CD8-positive, alpha-beta T cell (primary cell): ENCODE measurements at regions of chr11 and their contacts with region 1.

Region 1: DNA sequence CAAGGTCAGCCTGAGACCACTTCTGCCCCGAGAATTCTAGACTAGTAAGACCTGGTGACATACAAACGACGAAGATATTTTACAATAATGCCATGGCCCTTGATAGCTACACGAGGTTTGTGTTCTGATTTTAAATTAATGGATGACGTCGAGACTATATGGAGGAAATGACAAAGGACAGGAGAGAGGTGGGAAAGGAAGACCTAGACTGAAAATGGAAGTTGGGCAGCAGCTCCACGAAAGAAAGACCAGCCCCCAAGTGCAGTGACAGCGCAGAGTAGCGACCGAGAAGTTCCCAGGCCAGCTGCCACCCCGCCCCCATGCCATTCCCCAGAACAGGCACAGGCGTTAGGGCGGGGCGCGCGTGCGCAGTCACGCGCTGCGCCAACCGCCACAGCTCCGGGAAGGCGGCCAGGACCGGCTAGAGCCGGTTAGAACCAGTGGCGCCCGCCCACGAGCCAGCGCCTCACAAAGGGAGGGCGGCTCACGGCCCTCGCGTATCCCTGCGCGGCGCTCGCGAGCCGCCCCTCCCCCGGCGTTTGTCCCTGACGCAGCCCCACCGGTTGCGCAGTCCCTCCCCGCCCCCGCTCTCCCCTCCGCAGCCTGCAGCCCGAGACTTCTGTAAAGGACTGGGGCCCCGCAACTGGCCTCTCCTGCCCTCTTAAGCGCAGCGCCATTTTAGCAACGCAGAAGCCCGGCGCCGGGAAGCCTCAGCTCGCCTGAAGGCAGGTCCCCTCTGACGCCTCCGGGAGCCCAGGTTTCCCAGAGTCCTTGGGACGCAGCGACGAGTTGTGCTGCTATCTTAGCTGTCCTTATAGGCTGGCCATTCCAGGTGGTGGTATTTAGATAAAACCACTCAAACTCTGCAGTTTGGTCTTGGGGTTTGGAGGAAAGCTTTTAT is 1.5 kb upstream of the MALAT1 start:
- DNase-seq: peak; percentile 95 to 99 (median 98)
- ATAC-seq: peak; percentile 80
- H3K4me3 ChIP-seq: peak overlapping the region; percentile 72 to 84
- H3K4me3 Mint-ChIP-seq: no peak overlapping the region
- H3K27ac ChIP-seq: peak overlapping the region; percentile 98 to 99
- H3K27ac Mint-ChIP-seq: no peak overlapping the region
- H3K4me1 ChIP-seq: peaks cover 13% of the 10 kb centered on the region
- H3K4me1 Mint-ChIP-seq: peaks cover 19% of the 10 kb centered on the region
- H3K27me3 ChIP-seq: no peaks in the 10 kb centered on the region
- H3K27me3 Mint-ChIP-seq: no peaks in the 10 kb centered on the region
- CTCF ChIP-seq: no peak

Region 2: DNA sequence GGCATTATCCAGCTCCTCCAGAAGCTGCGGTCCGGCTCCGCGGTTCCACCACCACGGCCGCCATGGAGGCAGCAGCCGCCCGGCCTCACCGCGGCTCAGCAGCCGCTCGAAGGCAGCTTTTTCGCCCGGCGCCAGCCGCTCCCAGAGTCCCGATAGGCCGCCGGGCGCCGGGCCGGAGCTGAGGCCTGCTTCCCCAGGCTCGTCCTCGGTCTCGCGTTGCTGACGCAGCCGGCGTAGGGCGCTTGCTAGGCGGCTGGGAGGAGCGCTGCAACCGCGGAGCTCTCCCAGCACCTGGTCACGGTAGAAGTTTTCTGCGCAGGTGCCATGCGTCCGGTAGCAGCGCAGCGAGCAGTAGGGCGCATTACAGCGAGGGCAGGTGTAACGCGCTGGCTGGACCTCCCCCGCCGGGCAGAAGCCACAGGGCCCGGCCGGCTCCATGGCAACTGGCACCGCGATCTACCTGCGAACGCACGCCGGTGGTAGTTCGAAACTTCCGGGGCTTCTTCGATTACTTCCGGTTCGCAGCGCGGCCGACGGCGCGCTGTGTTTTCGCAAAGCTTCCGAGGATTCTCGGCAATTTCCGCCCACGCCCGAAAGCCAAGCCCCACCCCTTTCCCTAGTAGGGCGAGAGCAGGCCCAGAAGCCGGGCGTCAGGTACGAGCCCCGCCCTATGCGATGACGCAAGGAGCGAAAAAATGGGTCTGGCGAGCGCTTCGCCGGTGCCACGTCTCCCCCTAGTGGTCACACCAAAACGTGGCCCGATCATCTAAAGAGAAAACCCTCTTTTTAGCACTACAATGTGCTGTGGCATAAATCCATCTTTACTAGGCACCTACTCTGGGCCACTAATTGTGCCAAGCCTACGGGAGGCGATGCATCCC is 379.9 kb before region 1 on chr11 and contains the start of gene ZNHIT2:
- CTCF ChIA-PET with region 1: no interaction called
- POLR2A ChIA-PET with region 1: interaction called, 11 read pairs
- intact Hi-C with region 1: no loop called
- DNase-seq: peak; percentile 99 to 100 (median 100)
- ATAC-seq: peak; percentile 70
- H3K4me3 ChIP-seq: peak within 1 kb of the TSS; percentile 88
- H3K4me3 Mint-ChIP-seq: peak within 1 kb of the TSS; percentile 88
- H3K27ac ChIP-seq: peak within 1 kb of the TSS; percentile 88 to 95
- H3K27ac Mint-ChIP-seq: peak within 1 kb of the TSS; percentile 96
- H3K4me1 ChIP-seq: peaks cover 49% of the 10 kb centered on the region
- H3K4me1 Mint-ChIP-seq: peaks cover 56% of the 10 kb centered on the region
- H3K27me3 ChIP-seq: no peaks in the 10 kb centered on the region
- H3K27me3 Mint-ChIP-seq: no peaks in the 10 kb centered on the region
- CTCF ChIP-seq: peak; percentile 79
- total RNA-seq, gene ZNHIT2: 8.9 to 9.3 TPM

Region 3: DNA sequence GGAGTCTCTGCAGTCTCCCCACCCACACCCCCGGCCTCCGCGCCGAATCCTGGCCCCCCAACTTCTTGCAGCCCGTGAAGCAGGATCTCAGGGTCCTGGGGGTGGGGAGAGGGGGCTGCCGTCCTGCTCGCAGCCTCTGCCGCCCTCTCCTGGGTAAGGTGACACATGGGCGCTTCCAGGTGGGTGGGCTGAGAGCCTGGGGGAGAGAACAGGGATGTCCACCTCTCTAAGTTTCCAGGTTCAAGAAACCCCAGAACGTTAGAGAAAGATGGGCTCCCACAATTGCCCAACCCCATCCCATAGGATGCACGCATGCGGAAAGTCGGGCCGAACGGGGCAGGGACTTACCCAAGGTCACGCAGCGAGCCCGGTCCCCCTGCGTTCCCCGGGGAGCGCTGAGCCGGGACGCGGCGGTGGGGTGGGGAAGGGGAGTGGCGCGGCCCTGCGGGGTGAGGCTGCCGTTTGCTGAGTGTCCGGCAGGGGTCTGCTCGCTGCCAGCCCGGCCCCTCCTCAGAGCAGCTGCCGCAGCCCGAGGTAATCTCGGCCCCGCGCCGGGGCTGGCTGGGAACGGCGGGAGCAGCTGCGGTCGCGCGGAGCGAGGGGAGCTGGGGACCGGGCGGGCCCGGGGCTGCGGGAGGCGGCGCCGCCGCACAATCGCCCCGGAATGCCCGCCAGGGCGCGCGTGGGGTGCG is 316.4 kb before region 1 on chr11:
- CTCF ChIA-PET with region 1: no interaction called
- POLR2A ChIA-PET with region 1: no interaction called
- intact Hi-C with region 1: no loop called
- DNase-seq: peak; percentile 17 to 73 (median 53)
- ATAC-seq: peak; percentile 68
- H3K4me3 ChIP-seq: peak overlapping the region; percentile 85 to 95
- H3K4me3 Mint-ChIP-seq: peak overlapping the region; percentile 91
- H3K27ac ChIP-seq: peak overlapping the region in 1 of 2 experiments; percentile 23
- H3K27ac Mint-ChIP-seq: peak overlapping the region; percentile 80
- H3K4me1 ChIP-seq: peaks cover 24% of the 10 kb centered on the region
- H3K4me1 Mint-ChIP-seq: peaks cover 28% of the 10 kb centered on the region
- H3K27me3 ChIP-seq: no peaks in the 10 kb centered on the region
- H3K27me3 Mint-ChIP-seq: no peaks in the 10 kb centered on the region
- CTCF ChIP-seq: peak; percentile 57

Region 4: DNA sequence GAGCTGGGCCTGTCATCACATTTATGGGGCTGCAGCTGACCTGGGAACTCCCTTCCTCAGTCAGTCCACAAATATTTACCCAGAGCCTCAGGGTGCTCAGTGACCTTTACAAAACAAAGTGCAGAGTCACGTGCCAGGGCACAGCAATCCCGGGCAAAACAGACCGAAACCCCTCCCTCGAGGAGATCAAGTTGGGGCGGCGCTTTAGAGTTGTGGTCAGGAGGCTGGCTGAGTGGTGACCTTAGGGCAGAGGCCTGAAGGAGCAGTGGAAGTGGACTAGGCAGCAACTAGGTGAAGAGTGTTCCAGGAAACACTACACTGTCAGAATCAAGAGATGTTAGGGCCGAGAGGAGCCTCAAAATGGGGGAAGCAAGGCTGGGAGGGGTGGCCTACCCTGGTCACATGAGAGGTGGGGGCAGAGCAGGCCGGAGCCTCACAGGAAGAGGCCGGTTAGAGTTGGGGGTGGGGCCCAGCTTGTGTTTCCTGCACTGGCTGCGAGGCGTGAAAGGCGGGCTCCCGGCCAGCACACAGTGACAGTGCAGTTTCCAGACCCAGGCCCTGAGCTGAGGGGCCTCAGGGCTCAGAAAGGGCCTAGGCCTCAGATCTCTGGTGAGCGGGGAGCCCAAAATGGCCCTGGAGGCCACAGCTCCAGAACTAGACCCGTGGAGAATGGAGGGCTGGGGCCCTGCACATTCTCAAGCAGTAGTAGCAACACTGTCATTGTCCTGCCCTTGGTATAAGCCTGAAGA is 78.5 kb before region 1 on chr11:
- CTCF ChIA-PET with region 1: interaction called, 229 read pairs
- POLR2A ChIA-PET with region 1: interaction called, 1,786 read pairs
- intact Hi-C with region 1: loop called (anchors 1 to 2 kb)
- DNase-seq: peak in 8 of 9 experiments; percentile 71 to 90 (median 82)
- ATAC-seq: peak; percentile 4
- H3K4me3 ChIP-seq: peak overlapping the region; percentile 76 to 95
- H3K4me3 Mint-ChIP-seq: peak overlapping the region; percentile 94
- H3K27ac ChIP-seq: peak overlapping the region; percentile 99 to 100
- H3K27ac Mint-ChIP-seq: peak overlapping the region; percentile 98
- H3K4me1 ChIP-seq: peaks cover 58% of the 10 kb centered on the region
- H3K4me1 Mint-ChIP-seq: peaks cover 55% of the 10 kb centered on the region
- H3K27me3 ChIP-seq: no peaks in the 10 kb centered on the region
- H3K27me3 Mint-ChIP-seq: no peaks in the 10 kb centered on the region
- CTCF ChIP-seq: no peak

Region 5: GRCh38 chr11:65477149-65477965 is 20.0 kb before region 1 on chr11:
- CTCF ChIA-PET with region 1: interaction called, 36 read pairs
- POLR2A ChIA-PET with region 1: interaction called, 506 read pairs
- intact Hi-C with region 1: loop called (anchors 1 kb)
- DNase-seq: peak; percentile 71 to 94 (median 91)
- ATAC-seq: peak; percentile 78
- H3K4me3 ChIP-seq: peak overlapping the region; percentile 89 to 92
- H3K4me3 Mint-ChIP-seq: peak overlapping the region; percentile 100
- H3K27ac ChIP-seq: peak overlapping the region; percentile 89 to 98
- H3K27ac Mint-ChIP-seq: peak overlapping the region; percentile 100
- H3K4me1 ChIP-seq: peaks cover 12% of the 10 kb centered on the region
- H3K4me1 Mint-ChIP-seq: peaks cover 21% of the 10 kb centered on the region
- H3K27me3 ChIP-seq: no peaks in the 10 kb centered on the region
- H3K27me3 Mint-ChIP-seq: no peaks in the 10 kb centered on the region
- CTCF ChIP-seq: no peak

Region 6: GRCh38 chr11:65540297-65541092 is 43.1 kb after region 1 on chr11:
- CTCF ChIA-PET with region 1: interaction called, 13 read pairs
- POLR2A ChIA-PET with region 1: interaction called, 18 read pairs
- intact Hi-C with region 1: no loop called
- DNase-seq: peak; percentile 78 to 93 (median 88)
- ATAC-seq: peak; percentile 85
- H3K4me3 ChIP-seq: peak overlapping the region; percentile 77 to 80
- H3K4me3 Mint-ChIP-seq: peak overlapping the region; percentile 86
- H3K27ac ChIP-seq: peak overlapping the region; percentile 53 to 60
- H3K27ac Mint-ChIP-seq: peak overlapping the region; percentile 71
- H3K4me1 ChIP-seq: peaks cover 15% of the 10 kb centered on the region
- H3K4me1 Mint-ChIP-seq: peaks cover 19% of the 10 kb centered on the region
- H3K27me3 ChIP-seq: no peaks in the 10 kb centered on the region
- H3K27me3 Mint-ChIP-seq: no peaks in the 10 kb centered on the region
- CTCF ChIP-seq: peak; percentile 62

Region 7: GRCh38 chr11:65575568-65576231 is 78.3 kb after region 1 on chr11 and contains the start of gene EHBP1L1:
- CTCF ChIA-PET with region 1: interaction called, 4 read pairs
- POLR2A ChIA-PET with region 1: interaction called, 54 read pairs
- intact Hi-C with region 1: no loop called
- DNase-seq: peak; percentile 45 to 88 (median 75)
- ATAC-seq: peak; percentile 32
- H3K4me3 ChIP-seq: peak within 1 kb of the TSS; percentile 71 to 78
- H3K4me3 Mint-ChIP-seq: peak within 1 kb of the TSS; percentile 93
- H3K27ac ChIP-seq: peak within 1 kb of the TSS; percentile 49 to 89
- H3K27ac Mint-ChIP-seq: peak within 1 kb of the TSS; percentile 96
- H3K4me1 ChIP-seq: peaks cover 54% of the 10 kb centered on the region
- H3K4me1 Mint-ChIP-seq: peaks cover 55% of the 10 kb centered on the region
- H3K27me3 ChIP-seq: no peaks in the 10 kb centered on the region
- H3K27me3 Mint-ChIP-seq: no peaks in the 10 kb centered on the region
- CTCF ChIP-seq: no peak
- total RNA-seq, gene EHBP1L1: 64.7 to 65.1 TPM

Region 8: DNA sequence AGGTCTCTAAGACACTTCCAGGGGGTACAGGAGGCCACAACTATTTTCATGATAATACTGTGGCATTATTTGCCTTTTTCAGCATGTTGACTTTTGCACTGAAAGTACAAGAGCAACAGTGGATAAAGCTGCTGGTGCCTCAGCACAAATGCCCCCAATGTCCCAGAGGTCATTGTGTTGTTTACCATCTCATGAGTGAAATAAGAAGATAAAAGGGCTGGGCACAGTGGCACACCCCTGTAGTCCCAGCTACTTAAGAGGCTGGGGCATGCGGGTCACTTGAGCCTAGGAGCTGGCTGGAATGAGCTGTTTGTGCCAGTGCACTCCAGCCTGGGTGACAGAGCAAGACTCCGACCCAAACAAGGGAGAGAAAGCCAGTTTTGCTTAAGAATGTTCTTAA is 698.5 kb after region 1 on chr11:
- CTCF ChIA-PET with region 1: no interaction called
- POLR2A ChIA-PET with region 1: no interaction called
- intact Hi-C with region 1: no loop called
- DNase-seq: no peak
- ATAC-seq: no peak
- H3K4me3 ChIP-seq: no peak overlapping the region
- H3K4me3 Mint-ChIP-seq: no peak overlapping the region
- H3K27ac ChIP-seq: no peak overlapping the region
- H3K27ac Mint-ChIP-seq: no peak overlapping the region
- H3K4me1 ChIP-seq: no peaks in the 10 kb centered on the region
- H3K4me1 Mint-ChIP-seq: peaks cover 12% of the 10 kb centered on the region
- H3K27me3 ChIP-seq: no peaks in the 10 kb centered on the region
- H3K27me3 Mint-ChIP-seq: no peaks in the 10 kb centered on the region
- CTCF ChIP-seq: no peak